ENCODE measurements at regions of chr5 and their contacts with region 1.

Region 1: DNA sequence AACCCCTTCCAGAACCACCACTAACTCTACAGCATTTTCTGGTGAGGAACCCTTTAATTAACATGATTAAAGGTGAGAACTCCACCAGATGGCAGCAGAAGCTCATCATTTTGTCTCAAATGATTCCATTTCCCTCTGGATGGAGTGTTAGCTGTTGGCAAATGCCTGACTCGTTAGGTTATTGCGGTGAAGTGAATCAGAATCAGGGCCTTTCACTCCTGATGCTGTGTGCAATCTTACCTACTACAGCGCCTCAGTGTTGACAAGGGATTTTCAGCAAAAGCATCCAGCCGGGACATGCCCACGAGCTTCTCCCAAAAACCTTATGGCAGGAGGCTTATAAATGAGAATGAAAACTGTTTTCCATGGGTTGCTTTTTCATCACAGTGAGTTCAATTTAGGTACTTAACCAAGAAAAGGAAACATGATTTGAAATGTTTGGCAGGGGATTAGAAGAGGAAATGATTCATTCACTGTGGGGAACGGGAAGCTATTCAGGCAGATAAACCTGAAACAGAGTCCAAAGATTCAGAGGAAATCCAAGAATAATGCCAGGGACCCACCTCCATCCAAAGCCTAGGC is 48.0 kb upstream of the CAST start:
- DNase-seq: peak in 1 of 2 donors; percentile 77
- H3K4me3 ChIP-seq: peak overlapping the region in 1 of 2 donors; percentile 28
- H3K27ac ChIP-seq: peak overlapping the region; percentile 76 to 80
- H3K4me1 ChIP-seq: peaks cover 8 to 15% of the 10 kb centered on the region in 2 donors
- H3K27me3 ChIP-seq: no peaks in the 10 kb centered on the region
- CTCF ChIP-seq: peak; percentile 40 to 59 (median 52)

Region 2: DNA sequence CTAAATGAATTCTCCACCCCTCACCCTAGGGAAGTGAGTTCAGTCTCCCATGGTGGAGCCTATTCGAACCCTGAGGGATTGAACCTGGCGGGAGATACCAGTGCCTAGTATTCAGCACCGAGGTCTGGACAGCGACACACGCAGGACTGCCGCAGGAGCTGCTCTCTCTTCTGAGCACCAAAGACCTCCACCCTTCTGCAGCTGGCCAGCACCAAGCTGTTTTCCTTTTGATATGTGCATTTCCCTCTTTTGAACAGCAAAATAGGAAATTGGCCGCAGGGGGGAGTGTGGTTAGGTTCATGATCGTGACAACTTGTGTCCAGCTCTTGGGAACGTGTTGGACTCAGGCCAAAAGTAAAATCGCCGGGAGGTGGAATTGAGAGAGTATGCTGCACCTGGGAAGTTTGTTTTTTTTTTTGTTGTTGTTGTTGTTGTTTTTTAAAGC is 180.0 kb before region 1 on chr5:
- intact Hi-C with region 1: no loop called
- DNase-seq: no peak
- H3K4me3 ChIP-seq: no peak overlapping the region
- H3K27ac ChIP-seq: no peak overlapping the region
- H3K4me1 ChIP-seq: peaks cover 0 to 7% of the 10 kb centered on the region in 2 donors
- H3K27me3 ChIP-seq: no peaks in the 10 kb centered on the region
- CTCF ChIP-seq: peak in 2 of 3 experiments; percentile 8 to 13

Region 3: DNA sequence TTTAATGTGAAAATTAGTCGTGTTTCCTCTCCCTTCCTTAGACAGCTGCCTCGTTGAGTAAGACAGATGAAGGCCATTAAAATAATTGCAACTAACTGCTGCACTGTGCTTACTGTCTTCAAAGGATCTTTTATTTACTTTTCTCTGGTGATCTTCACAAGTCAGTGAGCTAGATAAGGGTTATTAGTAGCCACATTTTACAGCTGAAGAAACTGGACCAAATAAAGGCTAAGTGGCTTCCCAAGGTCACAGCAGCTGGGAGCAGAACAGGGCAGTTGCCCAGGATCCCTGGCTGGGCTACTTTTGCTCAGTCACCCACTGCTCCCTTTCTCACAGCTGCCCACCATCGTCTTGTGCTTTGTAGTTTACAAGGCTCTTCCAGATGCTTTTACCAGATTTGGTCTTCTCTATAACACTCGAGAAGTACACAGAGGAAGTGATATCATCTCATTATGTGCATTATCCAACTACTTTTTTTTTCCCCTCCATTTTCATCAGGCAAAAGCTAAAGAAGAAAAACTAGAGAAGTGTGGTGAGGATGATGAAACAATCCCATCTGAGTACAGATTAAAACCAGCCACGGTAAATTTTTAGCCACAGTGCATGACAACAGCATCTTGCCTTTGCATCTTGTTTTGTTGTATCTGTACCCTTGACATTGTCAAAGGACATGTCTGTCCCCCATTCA is 131.8 kb after region 1 on chr5:
- intact Hi-C with region 1: loop called (anchors 5 kb)
- DNase-seq: no peak
- H3K4me3 ChIP-seq: no peak overlapping the region
- H3K27ac ChIP-seq: peak overlapping the region in 1 of 2 donors; percentile 25
- H3K4me1 ChIP-seq: no peaks in the 10 kb centered on the region
- H3K27me3 ChIP-seq: no peaks in the 10 kb centered on the region
- CTCF ChIP-seq: no peak

Measured in ascending aorta (tissue), 2 donors.